ENCODE measurements at regions of chr2 and their contacts with region 1.

Region 1: GRCh38 chr2:169479257-169480078 is at the start of gene BBS5:
- DNase-seq: peak; percentile 89
- ATAC-seq: peak; percentile 98
- H3K4me3 Mint-ChIP-seq: peak within 1 kb of the TSS; percentile 81
- H3K27ac Mint-ChIP-seq: peak within 1 kb of the TSS; percentile 30
- H3K4me1 Mint-ChIP-seq: peaks cover 13% of the 10 kb centered on the region
- H3K27me3 Mint-ChIP-seq: no peaks in the 10 kb centered on the region
- CTCF ChIP-seq: peak; percentile 49
- total RNA-seq, gene BBS5: 2.6 to 3.2 TPM

Region 2: DNA sequence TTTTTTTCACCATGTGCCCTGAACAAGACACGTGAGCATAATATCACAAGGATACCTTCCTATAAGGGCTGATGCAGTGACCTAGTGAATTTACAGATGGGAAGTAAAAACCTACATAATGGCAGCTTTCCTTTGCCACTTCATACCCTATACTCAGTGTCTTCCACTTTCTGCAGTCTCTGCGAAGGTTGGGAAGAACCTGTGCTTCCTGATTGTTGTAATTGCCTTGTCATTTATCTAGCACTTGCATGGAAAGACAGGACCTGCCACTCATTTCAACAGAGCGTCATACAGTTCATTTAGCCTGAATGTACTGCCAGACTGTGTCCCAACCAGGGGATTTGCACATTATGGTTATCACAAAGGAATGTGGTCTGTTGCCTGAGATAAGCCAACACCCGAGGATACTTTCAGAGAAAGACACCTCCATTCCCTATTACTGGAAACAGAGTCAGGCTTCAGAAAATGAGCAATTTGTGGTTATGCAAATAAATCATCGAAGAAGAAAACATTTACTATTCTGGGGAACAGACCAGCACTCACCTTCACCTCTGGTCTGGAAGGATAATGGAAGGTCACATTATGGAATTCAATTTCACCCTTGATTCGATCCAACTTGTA is 503.3 kb before region 1 on chr2:
- CTCF ChIA-PET with region 1: no interaction called
- POLR2A ChIA-PET with region 1: no interaction called
- intact Hi-C with region 1: loop called (anchors 10 kb)
- DNase-seq: peak; percentile 7
- ATAC-seq: peak; percentile 50
- H3K4me3 Mint-ChIP-seq: no peak overlapping the region
- H3K27ac Mint-ChIP-seq: no peak overlapping the region
- H3K4me1 Mint-ChIP-seq: no peaks in the 10 kb centered on the region
- H3K27me3 Mint-ChIP-seq: no peaks in the 10 kb centered on the region
- CTCF ChIP-seq: no peak

Region 3: GRCh38 chr2:169272010-169272409 is 207.5 kb before region 1 on chr2:
- CTCF ChIA-PET with region 1: no interaction called
- POLR2A ChIA-PET with region 1: no interaction called
- intact Hi-C with region 1: no loop called
- DNase-seq: no peak
- ATAC-seq: no peak
- H3K4me3 Mint-ChIP-seq: no peak overlapping the region
- H3K27ac Mint-ChIP-seq: no peak overlapping the region
- H3K4me1 Mint-ChIP-seq: no peaks in the 10 kb centered on the region
- H3K27me3 Mint-ChIP-seq: peaks cover 17% of the 10 kb centered on the region
- CTCF ChIP-seq: no peak

Region 4: GRCh38 chr2:169303579-169304305 is 175.7 kb before region 1 on chr2:
- CTCF ChIA-PET with region 1: no interaction called
- POLR2A ChIA-PET with region 1: no interaction called
- intact Hi-C with region 1: no loop called
- DNase-seq: no peak
- ATAC-seq: no peak
- H3K4me3 Mint-ChIP-seq: no peak overlapping the region
- H3K27ac Mint-ChIP-seq: no peak overlapping the region
- H3K4me1 Mint-ChIP-seq: no peaks in the 10 kb centered on the region
- H3K27me3 Mint-ChIP-seq: peaks cover 11% of the 10 kb centered on the region
- CTCF ChIP-seq: no peak

Region 5: DNA sequence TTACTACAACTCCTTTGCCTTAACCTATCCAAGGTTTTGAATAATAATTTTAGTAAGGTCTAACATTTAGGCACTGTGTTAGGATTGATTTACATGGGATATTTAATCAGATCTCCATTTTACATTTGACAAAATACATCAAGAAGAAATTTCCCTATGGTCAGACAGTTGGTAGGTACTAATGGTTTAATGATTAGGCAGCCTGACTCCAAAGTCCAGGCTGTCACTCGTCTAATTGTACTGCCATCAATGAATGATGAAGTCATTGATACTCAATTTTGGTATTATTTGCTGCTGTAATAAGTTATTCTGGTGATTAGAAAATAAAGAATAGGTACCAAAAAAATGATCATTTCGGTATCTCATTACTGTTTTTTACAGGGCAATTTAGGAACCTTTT is 13.9 kb after region 1 on chr2:
- CTCF ChIA-PET with region 1: interaction called, 11 read pairs
- POLR2A ChIA-PET with region 1: interaction called, 4 read pairs
- intact Hi-C with region 1: no loop called
- DNase-seq: no peak
- ATAC-seq: no peak
- H3K4me3 Mint-ChIP-seq: no peak overlapping the region
- H3K27ac Mint-ChIP-seq: no peak overlapping the region
- H3K4me1 Mint-ChIP-seq: no peaks in the 10 kb centered on the region
- H3K27me3 Mint-ChIP-seq: no peaks in the 10 kb centered on the region
- CTCF ChIP-seq: no peak

Region 6: GRCh38 chr2:169507698-169508097 is 28.2 kb after region 1 on chr2:
- CTCF ChIA-PET with region 1: no interaction called
- POLR2A ChIA-PET with region 1: no interaction called
- intact Hi-C with region 1: no loop called
- DNase-seq: no peak
- ATAC-seq: peak; percentile 56
- H3K4me3 Mint-ChIP-seq: no peak overlapping the region
- H3K27ac Mint-ChIP-seq: no peak overlapping the region
- H3K4me1 Mint-ChIP-seq: peaks cover 8% of the 10 kb centered on the region
- H3K27me3 Mint-ChIP-seq: no peaks in the 10 kb centered on the region
- CTCF ChIP-seq: no peak